Activated T-helper 2 cell treated with anti-CD3 and anti-CD28 coated beads, Interferon-gamma antibody, Interleukin-2, Interleukin-4, amounts not matched to agents 10 μg/mL and 5 μg/mL and 100 μg/mL, durations not matched to agents 14 hours and 24 hours and 36 hours (primary cell): ENCODE measurements at regions of chr1 and their contacts with region 1.

Region 1: GRCh38 chr1:19661721-19662228 is 2.9 kb upstream of the HTR6 start:
- DNase-seq: no peak
- H3K4me3 Mint-ChIP-seq: no peak overlapping the region
- H3K27ac Mint-ChIP-seq: no peak overlapping the region
- H3K4me1 Mint-ChIP-seq: peaks cover 8% of the 10 kb centered on the region
- H3K27me3 Mint-ChIP-seq: peaks cover 28% of the 10 kb centered on the region

Region 2: GRCh38 chr1:19704247-19705113 is 42.7 kb after region 1 on chr1:
- intact Hi-C with region 1: loop called (anchors 1 kb)
- DNase-seq: peak; percentile 25
- H3K4me3 Mint-ChIP-seq: no peak overlapping the region
- H3K27ac Mint-ChIP-seq: no peak overlapping the region
- H3K4me1 Mint-ChIP-seq: no peaks in the 10 kb centered on the region
- H3K27me3 Mint-ChIP-seq: no peaks in the 10 kb centered on the region